ENCODE measurements at regions of chr6 and their contacts with region 1.

Region 1: DNA sequence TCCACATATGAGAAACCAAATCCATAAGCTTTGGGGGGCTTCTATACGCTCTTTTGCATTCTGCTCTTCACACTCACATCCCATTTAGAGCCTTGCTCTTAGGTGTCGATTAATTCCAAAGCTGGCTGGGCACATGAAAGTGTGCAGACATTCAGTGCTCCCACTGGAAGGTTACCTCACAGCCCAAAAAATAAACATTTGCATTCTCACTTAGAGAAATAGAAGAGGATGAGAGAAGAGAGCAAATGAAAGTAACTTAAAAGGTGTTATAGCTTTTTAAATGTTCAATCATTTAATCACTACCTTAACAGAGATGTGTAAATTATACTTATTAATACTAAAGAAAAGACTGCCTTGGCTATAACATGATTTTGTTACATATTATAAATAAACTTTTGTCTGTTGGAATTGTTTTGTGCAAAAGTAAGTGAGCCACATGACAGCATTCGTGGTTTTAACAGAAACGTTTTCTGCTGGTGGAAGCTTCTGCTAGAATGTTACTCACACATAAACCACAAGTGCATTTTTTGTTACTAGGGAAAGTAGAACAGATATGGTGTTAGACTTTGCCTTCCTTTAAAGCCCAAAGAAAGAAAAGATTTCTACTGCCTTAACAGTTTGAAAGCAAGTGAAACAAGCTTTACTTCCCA is 116.7 kb downstream of the SIM1 start:
- DNase-seq: no peak
- H3K4me3 ChIP-seq: no peak overlapping the region
- H3K27ac ChIP-seq: no peak overlapping the region
- H3K4me1 ChIP-seq: peaks cover 0 to 16% of the 10 kb centered on the region in 2 donors
- H3K27me3 ChIP-seq: no peaks in the 10 kb centered on the region
- CTCF ChIP-seq: no peak

Region 2: GRCh38 chr6:100105138-100105753 is 242.8 kb before region 1 on chr6:
- intact Hi-C with region 1: no loop called
- DNase-seq: no peak
- H3K4me3 ChIP-seq: no peak overlapping the region
- H3K27ac ChIP-seq: no peak overlapping the region
- H3K4me1 ChIP-seq: no peaks in the 10 kb centered on the region
- H3K27me3 ChIP-seq: no peaks in the 10 kb centered on the region
- CTCF ChIP-seq: no peak

Region 3: GRCh38 chr6:100880853-100881706 is 533.1 kb after region 1 on chr6 and contains the start of gene ASCC3:
- intact Hi-C with region 1: loop called (anchors 5 kb)
- DNase-seq: peak; percentile 57 to 93
- H3K4me3 ChIP-seq: peak within 1 kb of the TSS; percentile 75 to 91
- H3K27ac ChIP-seq: peak within 1 kb of the TSS; percentile 83 to 93
- H3K4me1 ChIP-seq: peaks cover 0 to 20% of the 10 kb centered on the region in 2 donors
- H3K27me3 ChIP-seq: no peaks in the 10 kb centered on the region
- CTCF ChIP-seq: no peak
- total RNA-seq, gene ASCC3: 12.7 TPM